Activated CD8-positive, alpha-beta T cell treated with anti-CD3 and anti-CD28 coated beads for 36 hours (primary cell): ENCODE measurements at regions of chr17 and their contacts with region 1.

Region 1: DNA sequence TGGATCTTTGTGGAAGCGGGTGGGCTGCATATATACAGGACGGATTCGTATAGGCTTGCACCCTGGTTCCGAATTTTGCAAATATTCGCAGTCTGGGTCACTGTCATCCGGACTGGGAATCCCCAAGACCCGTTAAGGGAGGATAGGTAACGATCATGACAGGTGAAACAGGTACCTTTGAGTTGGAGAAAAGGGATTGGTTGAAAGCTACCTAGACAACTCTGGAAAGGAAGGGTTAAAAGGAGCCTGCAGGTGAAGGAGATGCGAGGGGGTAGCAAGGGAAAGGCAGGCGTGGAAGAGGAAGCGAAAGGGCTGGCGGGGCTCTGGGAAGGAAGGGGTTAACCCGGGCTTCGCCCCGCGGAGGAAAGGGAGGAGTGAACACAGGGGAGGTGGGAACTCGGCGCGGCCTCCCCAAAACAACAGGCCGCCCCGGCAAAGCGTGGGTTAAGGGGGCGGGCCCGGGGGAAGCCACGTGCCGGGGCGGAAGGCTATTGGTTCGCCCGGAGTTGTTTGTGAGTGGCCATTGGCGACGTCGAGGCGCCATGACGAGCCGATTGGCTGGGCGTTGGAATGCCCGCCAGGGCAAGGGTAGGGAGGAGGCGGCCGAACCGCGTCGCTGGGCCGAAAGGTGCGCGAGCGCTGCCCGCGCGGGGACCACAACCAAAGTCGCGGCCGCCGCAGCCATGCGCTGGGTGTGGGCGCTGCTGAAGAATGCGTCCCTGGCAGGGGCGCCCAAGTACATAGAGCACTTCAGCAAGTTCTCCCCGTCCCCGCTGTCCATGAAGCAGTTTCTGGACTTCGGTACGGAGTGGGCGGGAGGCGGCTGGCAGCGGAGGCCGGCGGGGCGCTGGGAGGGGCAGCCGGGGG is at the start of gene PDK2:
- DNase-seq: peak; percentile 95
- ATAC-seq: peak; percentile 93
- H3K4me3 Mint-ChIP-seq: peak within 1 kb of the TSS; percentile 89
- H3K27ac Mint-ChIP-seq: peak within 1 kb of the TSS; percentile 90
- H3K4me1 Mint-ChIP-seq: peaks cover 26% of the 10 kb centered on the region
- H3K27me3 Mint-ChIP-seq: no peaks in the 10 kb centered on the region
- CTCF ChIP-seq: no peak
- total RNA-seq, gene PDK2: 6.0 to 7.7 TPM

Region 2: GRCh38 chr17:50037321-50038071 is 57.5 kb before region 1 on chr17:
- CTCF ChIA-PET with region 1: interaction called, 69 read pairs
- POLR2A ChIA-PET with region 1: no interaction called
- intact Hi-C with region 1: no loop called
- DNase-seq: no peak
- ATAC-seq: no peak
- H3K4me3 Mint-ChIP-seq: no peak overlapping the region
- H3K27ac Mint-ChIP-seq: no peak overlapping the region
- H3K4me1 Mint-ChIP-seq: no peaks in the 10 kb centered on the region
- H3K27me3 Mint-ChIP-seq: no peaks in the 10 kb centered on the region
- CTCF ChIP-seq: no peak

Region 3: DNA sequence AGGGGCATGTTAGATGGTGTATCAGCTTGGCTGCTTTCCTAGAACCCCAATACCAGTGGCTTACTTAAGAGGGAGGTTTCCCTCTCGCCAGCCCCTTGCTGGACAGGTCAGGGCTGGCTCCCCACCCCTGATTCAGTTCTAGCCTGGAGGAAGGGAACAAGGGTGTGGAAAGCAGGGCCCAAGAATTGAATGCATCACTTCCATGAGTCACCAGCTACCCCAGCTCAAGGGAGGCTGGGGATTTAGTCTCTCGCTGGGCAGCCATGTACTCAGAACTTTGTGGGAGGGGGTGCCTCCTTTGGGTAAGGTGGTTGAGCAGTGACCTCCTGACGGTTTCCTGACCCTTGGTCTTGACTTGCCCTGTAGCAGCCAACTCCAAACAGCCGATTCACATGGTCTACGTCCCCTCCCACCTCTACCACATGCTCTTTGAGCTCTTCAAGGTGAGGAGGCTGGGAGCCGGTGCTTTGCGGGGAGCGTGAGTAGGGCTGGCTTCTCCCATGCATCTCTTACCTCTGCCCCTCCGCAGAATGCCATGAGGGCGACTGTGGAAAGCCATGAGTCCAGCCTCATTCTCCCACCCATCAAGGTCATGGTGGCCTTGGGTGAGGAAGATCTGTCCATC is 12.9 kb after region 1 on chr17:
- CTCF ChIA-PET with region 1: interaction called, 23 read pairs
- POLR2A ChIA-PET with region 1: interaction called, 6 read pairs
- intact Hi-C with region 1: no loop called
- DNase-seq: no peak
- ATAC-seq: no peak
- H3K4me3 Mint-ChIP-seq: no peak overlapping the region
- H3K27ac Mint-ChIP-seq: no peak overlapping the region
- H3K4me1 Mint-ChIP-seq: no peaks in the 10 kb centered on the region
- H3K27me3 Mint-ChIP-seq: no peaks in the 10 kb centered on the region
- CTCF ChIP-seq: no peak

Region 4: DNA sequence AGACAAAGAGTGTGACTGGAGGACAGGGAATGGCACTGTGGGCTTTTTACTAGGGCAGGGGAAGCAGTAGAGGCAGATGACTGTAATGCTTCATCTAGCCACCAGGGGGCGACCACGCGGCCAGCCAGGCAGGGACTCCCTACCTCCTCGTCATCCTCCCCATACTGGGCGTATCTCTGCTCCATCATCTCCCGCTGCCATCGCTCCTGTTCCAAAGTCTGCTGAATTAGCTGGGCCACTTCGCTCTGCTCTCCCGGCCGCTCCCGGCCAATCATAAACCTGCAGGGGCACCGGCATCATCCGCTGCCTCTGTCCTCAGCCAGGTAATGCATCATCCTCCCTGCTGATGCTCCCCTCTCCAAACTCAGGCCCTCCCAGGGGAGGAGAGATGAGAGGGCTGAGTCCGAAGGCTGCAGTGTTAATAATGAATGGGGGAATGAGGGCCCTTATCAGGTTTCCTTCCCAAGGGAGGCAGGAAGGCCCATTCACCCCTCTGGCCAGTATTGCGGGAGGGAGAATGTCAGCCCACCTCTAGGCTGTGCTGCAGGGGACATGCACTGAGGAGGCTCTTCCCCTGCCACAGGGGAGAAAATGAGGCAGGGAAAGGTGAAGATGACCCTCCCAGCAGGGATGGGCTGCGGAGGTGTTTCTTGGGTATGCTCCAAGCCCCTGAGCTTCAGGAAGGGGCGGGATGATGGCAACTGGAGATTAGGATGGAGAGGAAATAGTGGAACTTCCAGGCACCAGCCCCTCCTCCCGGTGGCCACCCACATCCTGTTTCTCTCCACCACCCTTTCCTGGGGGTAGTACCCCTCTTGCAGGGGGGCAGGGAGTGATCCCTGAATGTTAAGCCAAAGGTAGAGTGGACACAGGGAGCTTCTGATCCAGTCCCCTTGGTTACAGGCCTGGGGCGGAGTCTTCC is 45.2 kb after region 1 on chr17:
- CTCF ChIA-PET with region 1: interaction called, 12 read pairs
- POLR2A ChIA-PET with region 1: interaction called, 3 read pairs
- intact Hi-C with region 1: no loop called
- DNase-seq: peak; percentile 87
- ATAC-seq: peak; percentile 90
- H3K4me3 Mint-ChIP-seq: no peak overlapping the region
- H3K27ac Mint-ChIP-seq: peak overlapping the region; percentile 61
- H3K4me1 Mint-ChIP-seq: peaks cover 53% of the 10 kb centered on the region
- H3K27me3 Mint-ChIP-seq: no peaks in the 10 kb centered on the region
- CTCF ChIP-seq: peak; percentile 94

Region 5: GRCh38 chr17:50169121-50169764 is 74.3 kb after region 1 on chr17:
- CTCF ChIA-PET with region 1: interaction called, 11 read pairs
- POLR2A ChIA-PET with region 1: interaction called, 3 read pairs
- intact Hi-C with region 1: no loop called
- DNase-seq: peak; percentile 71
- ATAC-seq: peak; percentile 86
- H3K4me3 Mint-ChIP-seq: peak overlapping the region; percentile 44
- H3K27ac Mint-ChIP-seq: peak overlapping the region; percentile 60
- H3K4me1 Mint-ChIP-seq: peaks cover 10% of the 10 kb centered on the region
- H3K27me3 Mint-ChIP-seq: peaks cover 3% of the 10 kb centered on the region
- CTCF ChIP-seq: peak; percentile 63

Region 6: GRCh38 chr17:50269477-50270434 is 174.8 kb after region 1 on chr17:
- CTCF ChIA-PET with region 1: interaction called, 10 read pairs
- POLR2A ChIA-PET with region 1: no interaction called
- intact Hi-C with region 1: no loop called
- DNase-seq: peak; percentile 88
- ATAC-seq: peak; percentile 94
- H3K4me3 Mint-ChIP-seq: no peak overlapping the region
- H3K27ac Mint-ChIP-seq: no peak overlapping the region
- H3K4me1 Mint-ChIP-seq: peaks cover 9% of the 10 kb centered on the region
- H3K27me3 Mint-ChIP-seq: peaks cover 11% of the 10 kb centered on the region
- CTCF ChIP-seq: peak; percentile 73